Mammary epithelial cell (primary cell): ENCODE measurements at regions of chr2 and their contacts with region 1.

Region 1: GRCh38 chr2:206800506-206801417 is 35.4 kb downstream of the FASTKD2 start:
- DNase-seq: peak; percentile 69
- H3K4me3 ChIP-seq: no peak overlapping the region
- H3K27ac ChIP-seq: no peak overlapping the region
- H3K4me1 ChIP-seq: no peaks in the 10 kb centered on the region
- H3K27me3 ChIP-seq: no peaks in the 10 kb centered on the region
- CTCF ChIP-seq: peak; percentile 66 to 75

Region 2: GRCh38 chr2:207073801-207074678 is 273.3 kb after region 1 on chr2:
- CTCF ChIA-PET with region 1: no interaction called
- dilution Hi-C with region 1: no loop called
- in situ Hi-C with region 1: no loop called
- intact Hi-C with region 1: loop called (anchors 10 kb)
- DNase-seq: no peak
- H3K4me3 ChIP-seq: no peak overlapping the region
- H3K27ac ChIP-seq: no peak overlapping the region
- H3K4me1 ChIP-seq: no peaks in the 10 kb centered on the region
- H3K27me3 ChIP-seq: no peaks in the 10 kb centered on the region
- CTCF ChIP-seq: no peak

Region 3: GRCh38 chr2:207734264-207734635 is 933.5 kb after region 1 on chr2:
- CTCF ChIA-PET with region 1: no interaction called
- dilution Hi-C with region 1: no loop called
- in situ Hi-C with region 1: no loop called
- intact Hi-C with region 1: loop called (anchors 10 kb)
- DNase-seq: no peak
- H3K4me3 ChIP-seq: no peak overlapping the region
- H3K27ac ChIP-seq: no peak overlapping the region
- H3K4me1 ChIP-seq: no peaks in the 10 kb centered on the region
- H3K27me3 ChIP-seq: no peaks in the 10 kb centered on the region
- CTCF ChIP-seq: peak; percentile 41 to 64